Caco-2 (cell line): ENCODE measurements at regions of chr9 and their contacts with region 1.

Region 1: GRCh38 chr9:133030317-133031129 is at the start of gene GTF3C5:
- DNase-seq: peak; percentile 95 to 96
- H3K4me3 ChIP-seq: peak within 1 kb of the TSS; percentile 94
- H3K4me3 Mint-ChIP-seq: peak within 1 kb of the TSS; percentile 89
- H3K27ac Mint-ChIP-seq: peak within 1 kb of the TSS; percentile 95
- H3K4me1 ChIP-seq: peaks cover 9% of the 10 kb centered on the region; the same call in 1 of the 2 replicates
- H3K4me1 Mint-ChIP-seq: peaks cover 15% of the 10 kb centered on the region
- H3K27me3 ChIP-seq: no peaks in the 10 kb centered on the region
- H3K27me3 Mint-ChIP-seq: peaks cover 5% of the 10 kb centered on the region
- CTCF ChIP-seq: no peak
- total RNA-seq, gene GTF3C5: 73.1 and 80.8 TPM in 2 replicates

Region 2: GRCh38 chr9:132381966-132382541 is 648.5 kb before region 1 on chr9:
- CTCF ChIA-PET with region 1: no interaction called
- POLR2A ChIA-PET with region 1: no interaction called
- intact Hi-C with region 1: no loop called
- DNase-seq: no peak
- H3K4me3 ChIP-seq: no peak overlapping the region
- H3K4me3 Mint-ChIP-seq: no peak overlapping the region
- H3K27ac Mint-ChIP-seq: no peak overlapping the region
- H3K4me1 ChIP-seq: no peaks in the 10 kb centered on the region
- H3K4me1 Mint-ChIP-seq: no peaks in the 10 kb centered on the region
- H3K27me3 ChIP-seq: no peaks in the 10 kb centered on the region
- H3K27me3 Mint-ChIP-seq: no peaks in the 10 kb centered on the region
- CTCF ChIP-seq: no peak

Region 3: GRCh38 chr9:132761602-132762001 is 268.9 kb before region 1 on chr9:
- CTCF ChIA-PET with region 1: interaction called, 16 read pairs
- POLR2A ChIA-PET with region 1: no interaction called
- intact Hi-C with region 1: no loop called
- DNase-seq: no peak
- H3K4me3 ChIP-seq: no peak overlapping the region
- H3K4me3 Mint-ChIP-seq: no peak overlapping the region
- H3K27ac Mint-ChIP-seq: no peak overlapping the region
- H3K4me1 ChIP-seq: no peaks in the 10 kb centered on the region
- H3K4me1 Mint-ChIP-seq: peaks cover 5% of the 10 kb centered on the region
- H3K27me3 ChIP-seq: no peaks in the 10 kb centered on the region
- H3K27me3 Mint-ChIP-seq: no peaks in the 10 kb centered on the region
- CTCF ChIP-seq: no peak

Region 4: DNA sequence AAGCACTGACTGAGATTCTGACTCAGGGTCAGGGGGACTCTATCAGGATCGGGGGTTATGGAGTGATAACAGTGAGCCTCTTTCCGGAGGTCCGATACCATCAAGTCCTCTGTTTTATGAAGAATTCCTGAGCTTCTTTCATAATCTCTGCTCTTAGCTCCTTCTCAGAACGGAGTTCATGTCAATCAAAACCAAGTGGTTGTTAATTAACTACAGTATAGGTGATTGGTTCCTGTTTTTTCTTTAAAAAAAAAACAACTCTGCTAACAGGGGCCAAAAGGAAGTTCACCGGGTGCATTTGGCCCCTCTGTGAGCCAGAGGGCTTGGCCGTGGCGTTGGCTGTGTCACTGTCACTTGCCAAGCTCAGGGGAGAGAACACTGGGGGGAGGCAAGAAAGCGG is 48.1 kb before region 1 on chr9:
- CTCF ChIA-PET with region 1: interaction called, 6 read pairs
- POLR2A ChIA-PET with region 1: interaction called, 13 read pairs
- intact Hi-C with region 1: no loop called
- DNase-seq: no peak
- H3K4me3 ChIP-seq: no peak overlapping the region
- H3K4me3 Mint-ChIP-seq: peak overlapping the region; percentile 40
- H3K27ac Mint-ChIP-seq: no peak overlapping the region
- H3K4me1 ChIP-seq: peaks cover 19% of the 10 kb centered on the region
- H3K4me1 Mint-ChIP-seq: peaks cover 14% of the 10 kb centered on the region
- H3K27me3 ChIP-seq: no peaks in the 10 kb centered on the region
- H3K27me3 Mint-ChIP-seq: peaks cover 3% of the 10 kb centered on the region
- CTCF ChIP-seq: no peak

Region 5: DNA sequence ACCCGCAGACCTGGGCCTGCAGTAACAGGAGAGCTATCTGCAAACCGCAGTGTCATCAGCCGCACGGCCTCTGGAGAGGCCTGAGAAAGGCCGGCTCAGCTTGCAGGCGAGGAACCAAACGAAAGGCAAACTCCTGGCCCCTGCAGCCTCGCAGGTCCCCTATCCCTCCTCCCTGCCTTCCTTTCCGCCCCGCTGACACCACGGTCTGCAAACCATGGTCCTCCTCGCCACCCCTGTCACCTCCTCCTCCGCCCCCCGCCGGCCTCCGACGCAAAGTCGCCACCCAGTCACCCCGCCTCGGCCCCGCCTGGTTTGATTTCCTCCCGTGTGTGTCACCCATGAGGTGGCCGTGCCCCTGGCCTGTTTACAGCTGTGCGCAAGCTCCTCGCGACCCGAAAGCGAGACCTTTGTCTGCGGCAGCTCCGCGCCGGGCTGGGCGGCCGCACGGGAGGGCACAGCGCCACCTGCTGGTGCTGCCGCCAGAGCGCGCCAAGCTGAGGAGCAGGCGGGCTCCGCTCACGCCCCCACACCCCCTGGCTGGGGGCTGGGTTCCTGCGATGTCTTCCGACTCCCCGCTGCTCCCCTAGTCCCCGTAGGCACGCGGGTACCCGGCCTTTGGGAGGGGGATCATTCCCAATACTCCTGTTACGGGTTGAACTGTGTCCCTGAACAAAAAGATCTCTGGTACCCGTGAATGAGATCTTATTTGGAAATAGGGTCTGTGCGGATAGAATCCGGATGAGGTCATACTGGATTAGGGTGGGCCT is 113.8 kb after region 1 on chr9:
- CTCF ChIA-PET with region 1: interaction called, 15 read pairs
- POLR2A ChIA-PET with region 1: interaction called, 17 read pairs
- intact Hi-C with region 1: no loop called
- DNase-seq: peak; percentile 74 to 84
- H3K4me3 ChIP-seq: peak overlapping the region; percentile 20; the same call in 1 of the 2 replicates
- H3K4me3 Mint-ChIP-seq: peak overlapping the region; percentile 65
- H3K27ac Mint-ChIP-seq: peak overlapping the region; percentile 74
- H3K4me1 ChIP-seq: peaks cover 20% of the 10 kb centered on the region
- H3K4me1 Mint-ChIP-seq: peaks cover 4% of the 10 kb centered on the region
- H3K27me3 ChIP-seq: no peaks in the 10 kb centered on the region
- H3K27me3 Mint-ChIP-seq: no peaks in the 10 kb centered on the region
- CTCF ChIP-seq: peak; percentile 82 to 95

Region 6: DNA sequence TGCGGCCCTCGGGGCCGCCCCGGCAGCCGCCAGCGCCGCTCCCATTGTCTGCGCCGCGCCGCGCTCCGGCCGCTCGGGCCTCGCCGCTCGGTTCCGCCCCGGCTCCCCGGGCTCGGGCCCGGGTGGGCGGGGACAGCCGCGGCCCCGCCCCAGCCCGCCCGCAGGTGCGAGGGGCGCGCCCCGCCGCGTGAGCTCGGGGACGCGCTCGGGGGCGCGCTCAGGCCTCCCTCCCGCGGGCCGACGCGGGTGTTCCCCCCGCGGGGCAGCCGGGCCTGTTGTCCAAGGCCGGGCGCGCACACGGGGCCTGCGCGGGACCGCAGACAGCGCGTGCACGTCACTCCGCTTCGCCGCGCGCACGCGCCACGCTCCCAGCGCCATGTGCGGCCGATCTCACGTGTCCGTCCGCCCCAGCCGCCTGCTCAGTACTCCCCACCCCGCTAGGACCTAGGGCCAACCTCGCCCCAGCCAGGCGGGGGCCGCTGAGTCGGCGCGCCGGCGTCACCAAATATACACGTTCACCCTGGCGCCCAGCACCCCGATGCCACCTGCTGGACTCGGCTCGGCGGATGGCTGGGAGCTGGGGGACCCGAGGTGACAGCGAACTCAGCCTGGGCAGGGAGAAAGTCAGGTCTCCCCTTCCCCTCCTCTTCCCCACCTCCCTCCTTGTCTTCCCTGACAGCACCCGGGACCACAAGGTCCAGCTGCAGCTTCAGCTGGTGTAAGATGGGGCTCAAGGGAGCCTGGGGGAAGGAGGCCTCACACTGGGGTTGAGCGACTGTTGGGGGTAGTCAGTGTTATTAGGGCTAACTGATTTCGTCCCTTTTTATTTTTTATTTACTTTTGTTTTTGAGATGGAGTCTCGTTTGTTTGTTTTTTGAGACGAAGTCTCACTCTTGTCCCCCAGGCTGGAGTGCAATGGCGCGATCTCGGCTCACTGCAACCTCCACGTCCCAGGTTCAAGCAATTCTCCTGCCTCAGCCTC is 118.9 kb after region 1 on chr9:
- CTCF ChIA-PET with region 1: interaction called, 15 read pairs
- POLR2A ChIA-PET with region 1: interaction called, 17 read pairs
- intact Hi-C with region 1: no loop called
- DNase-seq: peak; percentile 90 to 92
- H3K4me3 ChIP-seq: peak overlapping the region; percentile 86
- H3K4me3 Mint-ChIP-seq: peak overlapping the region; percentile 72
- H3K27ac Mint-ChIP-seq: peak overlapping the region; percentile 77
- H3K4me1 ChIP-seq: peaks cover 6% of the 10 kb centered on the region
- H3K4me1 Mint-ChIP-seq: peaks cover 4% of the 10 kb centered on the region
- H3K27me3 ChIP-seq: no peaks in the 10 kb centered on the region
- H3K27me3 Mint-ChIP-seq: no peaks in the 10 kb centered on the region
- CTCF ChIP-seq: peak in 1 of 2 experiments; percentile 46

Region 7: DNA sequence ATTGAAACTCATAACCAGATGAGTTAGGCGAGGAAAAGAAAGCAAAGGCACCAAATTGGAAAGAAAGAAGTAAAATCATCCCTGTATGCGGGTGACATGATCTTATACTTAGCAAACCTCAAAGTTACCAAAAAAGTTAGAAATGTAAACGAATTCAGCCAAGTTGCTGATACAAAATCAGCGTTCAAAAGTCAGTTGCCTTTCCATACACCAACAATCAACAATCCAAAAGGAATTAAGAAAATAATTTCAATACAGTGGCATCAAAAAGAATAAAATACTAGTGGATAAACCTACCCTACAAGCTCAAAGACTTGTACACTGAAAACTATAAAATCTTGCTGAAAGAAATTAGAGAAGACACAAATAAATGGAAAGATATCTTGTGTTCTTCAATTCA is 164.1 kb after region 1 on chr9:
- CTCF ChIA-PET with region 1: no interaction called
- POLR2A ChIA-PET with region 1: no interaction called
- intact Hi-C with region 1: no loop called
- DNase-seq: no peak
- H3K4me3 ChIP-seq: no peak overlapping the region
- H3K4me3 Mint-ChIP-seq: no peak overlapping the region
- H3K27ac Mint-ChIP-seq: no peak overlapping the region
- H3K4me1 ChIP-seq: no peaks in the 10 kb centered on the region
- H3K4me1 Mint-ChIP-seq: no peaks in the 10 kb centered on the region
- H3K27me3 ChIP-seq: no peaks in the 10 kb centered on the region
- H3K27me3 Mint-ChIP-seq: no peaks in the 10 kb centered on the region
- CTCF ChIP-seq: no peak

Region 8: GRCh38 chr9:133440874-133441273 is 410.4 kb after region 1 on chr9:
- CTCF ChIA-PET with region 1: no interaction called
- POLR2A ChIA-PET with region 1: no interaction called
- intact Hi-C with region 1: no loop called
- DNase-seq: no peak
- H3K4me3 ChIP-seq: no peak overlapping the region
- H3K4me3 Mint-ChIP-seq: no peak overlapping the region
- H3K27ac Mint-ChIP-seq: no peak overlapping the region
- H3K4me1 ChIP-seq: no peaks in the 10 kb centered on the region
- H3K4me1 Mint-ChIP-seq: no peaks in the 10 kb centered on the region
- H3K27me3 ChIP-seq: no peaks in the 10 kb centered on the region
- H3K27me3 Mint-ChIP-seq: no peaks in the 10 kb centered on the region
- CTCF ChIP-seq: no peak